PC-9 (cell line): ENCODE measurements at regions of chr9 and their contacts with region 1.

Region 1: DNA sequence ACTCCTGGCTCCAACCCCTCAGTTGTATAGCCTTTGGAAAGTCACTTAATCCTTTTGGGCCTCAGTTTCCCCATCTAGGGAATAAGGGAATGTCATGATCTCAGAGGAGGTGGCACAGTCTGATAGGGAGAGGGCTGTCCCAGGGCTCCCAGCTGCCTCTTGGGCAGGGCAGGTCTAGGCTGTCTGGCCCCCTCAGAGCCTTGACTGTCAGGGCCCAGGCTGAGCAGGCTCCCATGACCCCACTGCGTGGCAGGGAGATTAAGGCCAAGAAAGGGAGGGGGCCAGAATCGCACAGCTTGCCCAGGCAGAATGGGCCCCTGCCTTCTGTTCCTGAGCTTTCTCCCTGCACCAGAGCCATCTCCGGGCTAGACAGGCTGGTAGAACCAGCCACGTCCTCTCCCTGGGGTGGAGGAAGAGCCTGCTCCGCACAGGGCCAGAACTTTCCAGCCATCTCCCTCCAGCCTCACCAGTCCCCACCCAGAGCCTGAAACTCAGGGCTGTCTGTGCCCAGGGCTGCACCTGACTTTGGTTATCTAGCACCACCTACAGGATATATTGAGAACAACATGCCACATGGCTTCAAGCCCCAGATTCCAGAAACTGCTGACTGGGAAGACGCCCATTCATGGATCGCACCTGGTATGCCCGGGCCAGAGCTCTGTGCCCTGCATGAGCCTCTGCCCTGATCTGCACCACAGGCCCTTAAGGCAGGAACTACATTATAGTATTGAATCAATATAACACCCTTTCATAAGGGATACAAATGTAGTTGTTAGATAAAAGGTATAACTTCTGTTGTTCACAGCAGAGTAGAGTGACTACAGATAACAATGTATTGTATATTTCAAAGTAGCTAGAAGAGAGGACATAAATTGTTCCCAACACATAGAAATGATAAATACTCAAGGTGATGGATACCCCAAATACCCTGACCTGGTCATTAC is 32.0 kb downstream of the NAIF1 start:
- DNase-seq: peak; percentile 77 to 85
- H3K4me3 ChIP-seq: no peak overlapping the region
- H3K27ac ChIP-seq: no peak overlapping the region
- H3K4me1 ChIP-seq: peaks cover 18% of the 10 kb centered on the region
- H3K27me3 ChIP-seq: no peaks in the 10 kb centered on the region
- CTCF ChIP-seq: peak; percentile 94

Region 2: DNA sequence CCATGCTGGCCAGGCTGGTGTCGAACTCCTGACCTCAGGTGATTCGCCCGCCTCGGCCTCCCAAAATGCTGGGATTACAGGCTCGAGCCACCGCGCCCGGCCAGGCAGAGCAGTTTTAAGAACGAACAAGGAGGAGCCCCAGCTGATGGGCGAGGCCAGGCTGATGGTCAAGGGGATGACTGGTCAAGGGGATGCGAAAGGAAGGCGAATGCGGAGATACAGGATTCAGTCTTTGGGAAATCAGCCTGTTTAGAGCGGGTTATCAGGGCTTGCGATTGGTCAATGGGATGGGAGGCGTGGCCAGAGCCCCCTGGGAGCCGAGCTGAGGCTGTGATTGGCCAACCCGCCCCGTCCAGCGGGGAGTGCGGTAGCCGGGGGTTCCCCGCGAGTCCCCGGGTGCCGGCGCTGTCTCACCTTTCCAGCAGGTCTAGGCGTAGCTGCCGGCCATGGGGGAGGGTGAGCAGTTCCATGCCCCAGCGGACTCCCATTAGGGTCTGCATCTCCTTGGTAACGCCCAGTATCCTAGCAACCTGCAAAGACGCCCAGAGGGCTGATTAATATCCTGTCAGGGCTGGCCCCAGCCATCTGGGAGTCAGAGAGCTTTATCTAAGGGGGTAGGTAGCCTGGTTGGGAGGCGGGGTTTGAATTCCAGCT is 292.5 kb before region 1 on chr9:
- CTCF ChIA-PET with region 1: no interaction called
- POLR2A ChIA-PET with region 1: no interaction called
- intact Hi-C with region 1: loop called (anchors 5 kb)
- DNase-seq: peak; percentile 49 to 68
- H3K4me3 ChIP-seq: no peak overlapping the region
- H3K27ac ChIP-seq: no peak overlapping the region
- H3K4me1 ChIP-seq: peaks cover 24% of the 10 kb centered on the region
- H3K27me3 ChIP-seq: peaks cover 13% of the 10 kb centered on the region; the same call in 1 of the 2 replicates
- CTCF ChIP-seq: no peak

Region 3: DNA sequence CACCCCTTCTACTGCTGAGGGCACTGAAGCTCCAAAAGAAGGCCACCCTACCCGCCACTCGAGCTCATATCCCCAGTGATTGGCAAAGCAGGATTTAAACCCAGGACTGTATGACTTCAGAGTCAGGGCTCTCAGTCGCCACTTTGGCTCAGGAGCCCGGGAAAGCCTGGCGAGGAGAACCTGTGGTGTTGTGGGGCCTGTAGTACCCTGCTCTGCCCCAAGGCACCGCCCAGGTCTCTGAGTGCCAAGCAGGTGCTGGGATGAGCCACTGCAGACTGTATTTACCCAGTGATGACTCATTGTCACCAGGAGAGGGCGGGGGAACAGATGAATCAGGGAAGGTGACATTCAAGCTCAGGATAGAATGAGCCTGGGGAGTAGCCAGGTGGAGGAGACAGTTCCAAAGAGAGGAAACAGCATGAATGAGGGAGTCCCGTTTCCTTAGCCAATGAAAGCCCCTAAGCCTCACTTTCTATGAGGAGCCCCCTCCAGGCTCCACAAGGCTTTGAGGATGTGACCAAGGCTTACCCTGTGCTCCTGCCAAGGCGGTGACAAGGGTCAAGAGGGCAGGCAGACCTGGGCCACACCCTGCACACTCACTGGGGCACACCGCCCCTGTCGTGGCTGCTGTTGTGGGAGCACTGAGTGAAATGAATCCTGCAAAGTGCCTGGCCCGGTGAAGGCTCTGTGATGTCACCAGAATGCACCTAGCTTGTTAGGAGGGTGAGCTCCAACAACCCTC is 79.6 kb before region 1 on chr9:
- CTCF ChIA-PET with region 1: interaction called, 4 read pairs
- POLR2A ChIA-PET with region 1: interaction called, 3 read pairs
- intact Hi-C with region 1: loop called (anchors 1 kb)
- DNase-seq: peak; percentile 96 to 97
- H3K4me3 ChIP-seq: peak overlapping the region; percentile 10; the same call in 1 of the 2 replicates
- H3K27ac ChIP-seq: peak overlapping the region; percentile 82
- H3K4me1 ChIP-seq: peaks cover 60% of the 10 kb centered on the region
- H3K27me3 ChIP-seq: no peaks in the 10 kb centered on the region
- CTCF ChIP-seq: peak; percentile 68

Region 4: GRCh38 chr9:127980706-127981558 is 54.2 kb before region 1 on chr9 and contains the start of gene EEIG1:
- CTCF ChIA-PET with region 1: interaction called, 4 read pairs
- POLR2A ChIA-PET with region 1: interaction called, 7 read pairs
- intact Hi-C with region 1: loop called (anchors 1 kb)
- DNase-seq: peak; percentile 73 to 99
- H3K4me3 ChIP-seq: peak within 1 kb of the TSS; percentile 82
- H3K27ac ChIP-seq: peak within 1 kb of the TSS; percentile 39
- H3K4me1 ChIP-seq: peaks cover 45% of the 10 kb centered on the region
- H3K27me3 ChIP-seq: no peaks in the 10 kb centered on the region
- CTCF ChIP-seq: no peak
- total RNA-seq, gene EEIG1: 176 and 208 TPM in 2 replicates

Region 5: GRCh38 chr9:128078504-128079434 is 43.7 kb after region 1 on chr9:
- CTCF ChIA-PET with region 1: interaction called, 3 read pairs
- POLR2A ChIA-PET with region 1: no interaction called
- intact Hi-C with region 1: loop called (anchors 2 kb)
- DNase-seq: peak; percentile 79 to 94
- H3K4me3 ChIP-seq: no peak overlapping the region
- H3K27ac ChIP-seq: peak overlapping the region; percentile 74
- H3K4me1 ChIP-seq: peaks cover 42% of the 10 kb centered on the region
- H3K27me3 ChIP-seq: no peaks in the 10 kb centered on the region
- CTCF ChIP-seq: no peak